ENCODE measurements at regions of chr6 and their contacts with region 1.

Region 1: GRCh38 chr6:30396833-30397479 is 52.0 kb downstream of the RPP21 start:
- DNase-seq: peak; percentile 89 to 96
- ATAC-seq: peak; percentile 91
- H3K4me3 ChIP-seq: no peak overlapping the region
- H3K27ac ChIP-seq: no peak overlapping the region
- H3K4me1 ChIP-seq: no peaks in the 10 kb centered on the region
- H3K27me3 ChIP-seq: no peaks in the 10 kb centered on the region

Region 2: GRCh38 chr6:30219244-30219643 is 177.7 kb before region 1 on chr6:
- intact Hi-C with region 1: loop called (anchors 5 kb)
- DNase-seq: no peak
- ATAC-seq: no peak
- H3K4me3 ChIP-seq: no peak overlapping the region
- H3K27ac ChIP-seq: no peak overlapping the region
- H3K4me1 ChIP-seq: no peaks in the 10 kb centered on the region
- H3K27me3 ChIP-seq: no peaks in the 10 kb centered on the region